ENCODE measurements at regions of chr3 and their contacts with region 1.

Region 1: DNA sequence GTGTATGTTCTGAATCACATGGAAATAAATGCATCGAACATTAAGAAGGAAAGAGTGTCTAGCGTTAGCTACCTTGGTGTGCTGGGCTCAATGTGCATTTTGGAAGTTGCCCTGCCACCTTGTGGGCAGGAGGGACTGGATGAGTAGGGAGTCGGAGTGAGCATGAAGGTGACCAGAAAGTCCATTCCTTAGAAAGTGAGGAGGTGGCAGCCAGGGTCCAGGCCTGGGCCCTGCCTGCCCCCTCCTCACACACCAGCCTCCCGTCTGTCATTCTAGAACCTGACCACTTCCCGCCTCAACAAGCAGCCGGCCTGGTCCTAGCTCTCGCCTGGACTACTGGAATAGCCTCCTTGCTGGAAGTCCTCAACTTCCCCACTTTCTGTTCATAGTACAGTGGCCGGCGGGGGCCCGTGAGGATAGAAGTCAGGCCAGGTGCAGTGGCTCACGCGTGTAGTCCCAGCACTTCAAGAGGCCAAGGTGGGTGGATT is 10.2 kb upstream of the GATA2 start:
- DNase-seq: no peak
- H3K4me3 ChIP-seq: no peak overlapping the region
- H3K27ac ChIP-seq: no peak overlapping the region
- H3K4me1 ChIP-seq: peaks cover 3% of the 10 kb centered on the region
- H3K27me3 ChIP-seq: peaks cover 64% of the 10 kb centered on the region
- CTCF ChIP-seq: peak; percentile 44

Region 2: DNA sequence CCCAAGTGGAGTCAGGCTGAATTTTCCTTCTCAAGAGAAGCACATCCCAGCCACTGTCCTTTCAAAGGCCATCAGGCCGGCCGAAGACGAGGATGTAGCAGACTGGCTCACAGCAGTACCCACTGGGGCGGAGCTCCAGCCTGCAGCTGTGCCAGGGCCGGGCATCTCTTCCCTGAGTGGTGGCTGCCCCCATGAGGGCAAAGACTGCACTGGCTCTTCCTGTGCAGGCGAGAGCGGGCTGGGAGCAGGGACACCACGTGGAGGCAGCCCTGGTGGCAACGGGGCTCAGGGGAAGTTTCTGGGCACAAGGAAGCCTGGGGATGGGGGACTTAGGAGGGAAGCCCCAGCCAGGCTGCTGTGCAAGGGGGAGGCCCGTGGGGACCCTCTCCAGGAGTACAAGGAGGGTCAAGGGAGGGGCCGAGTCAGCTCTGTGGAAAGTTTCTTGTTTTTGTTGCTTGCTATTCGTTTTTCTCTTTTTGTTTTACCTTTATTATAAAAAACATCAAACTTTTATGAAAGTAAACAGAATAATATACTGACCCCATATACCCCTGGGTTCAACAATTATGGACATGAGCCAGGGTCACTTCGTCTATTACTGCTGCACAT is 81.3 kb after region 1 on chr3:
- intact Hi-C with region 1: loop called (anchors 10 kb)
- DNase-seq: peak; percentile 67
- H3K4me3 ChIP-seq: no peak overlapping the region
- H3K27ac ChIP-seq: no peak overlapping the region
- H3K4me1 ChIP-seq: peaks cover 8% of the 10 kb centered on the region
- H3K27me3 ChIP-seq: peaks cover 7% of the 10 kb centered on the region
- CTCF ChIP-seq: peak; percentile 85

Measured in left ventricle myocardium inferior (tissue), 1 donor.